Activated CD8-positive, alpha-beta T cell treated with anti-CD3 and anti-CD28 coated beads for 36 hours (primary cell): ENCODE measurements at regions of chr7 and their contacts with region 1.

Region 1: GRCh38 chr7:128343554-128344430 is at the start of gene RBM28:
- DNase-seq: peak; percentile 90
- ATAC-seq: peak; percentile 97
- H3K4me3 Mint-ChIP-seq: peak within 1 kb of the TSS; percentile 85
- H3K27ac Mint-ChIP-seq: peak within 1 kb of the TSS; percentile 93
- H3K4me1 Mint-ChIP-seq: peaks cover 26% of the 10 kb centered on the region
- H3K27me3 Mint-ChIP-seq: peaks cover 3% of the 10 kb centered on the region
- CTCF ChIP-seq: no peak
- total RNA-seq, gene RBM28: 55.3 to 55.6 TPM

Region 2: DNA sequence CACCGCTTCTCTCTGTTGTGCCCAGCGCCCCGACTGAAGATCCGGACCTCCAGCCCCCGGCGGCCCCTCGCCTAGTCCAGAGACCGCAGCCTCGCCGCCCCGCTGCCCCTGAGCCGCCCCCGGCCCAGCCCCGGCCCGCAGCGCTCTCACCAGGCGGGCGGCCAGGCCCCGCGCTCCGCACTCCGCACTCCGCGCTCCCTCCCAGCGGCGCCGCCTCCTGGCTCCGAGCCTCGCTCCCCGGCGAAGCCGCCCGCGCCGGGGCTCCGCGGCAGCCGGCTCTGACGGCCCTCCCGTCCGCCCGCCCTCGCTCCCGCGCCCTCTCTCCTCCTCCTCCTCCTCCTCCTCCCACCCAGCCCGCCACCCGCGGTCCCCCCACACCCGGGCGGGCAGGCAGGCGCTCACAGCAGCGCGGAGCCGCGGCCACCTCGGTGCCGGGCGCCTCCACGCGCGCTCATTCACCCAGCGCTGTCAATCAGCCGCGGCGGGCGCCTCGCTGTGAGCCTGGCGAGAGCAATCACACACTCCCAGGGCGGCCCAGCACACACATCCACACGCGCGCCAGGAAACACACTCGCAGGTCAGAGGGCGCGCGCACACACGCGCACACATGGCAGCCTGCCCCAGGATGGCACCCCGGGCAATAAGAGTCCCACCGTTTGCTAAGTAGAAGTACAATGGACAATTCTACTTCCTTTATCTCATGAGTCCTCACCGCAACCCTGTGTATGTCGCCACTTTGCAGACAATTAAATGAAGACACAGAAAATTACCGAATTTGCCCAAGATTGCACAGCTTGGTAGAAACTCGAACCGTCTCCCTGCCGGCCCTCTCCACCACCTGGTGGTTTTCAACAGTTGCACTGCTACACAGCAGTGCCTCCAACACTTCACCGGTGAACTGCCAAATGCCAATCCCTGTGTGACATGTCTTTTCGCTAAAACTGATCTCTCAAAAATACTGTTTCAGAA is 17.9 kb after region 1 on chr7 and contains the start of gene PRRT4:
- CTCF ChIA-PET with region 1: interaction called, 12 read pairs
- POLR2A ChIA-PET with region 1: interaction called, 11 read pairs
- intact Hi-C with region 1: no loop called
- DNase-seq: peak; percentile 45
- ATAC-seq: peak; percentile 63
- H3K4me3 Mint-ChIP-seq: peak within 1 kb of the TSS; percentile 64
- H3K27ac Mint-ChIP-seq: peak within 1 kb of the TSS; percentile 15
- H3K4me1 Mint-ChIP-seq: peaks cover 19% of the 10 kb centered on the region
- H3K27me3 Mint-ChIP-seq: peaks cover 51% of the 10 kb centered on the region
- CTCF ChIP-seq: no peak
- total RNA-seq, gene PRRT4: 0.20 to 0.69 TPM

Region 3: GRCh38 chr7:128373606-128374005 is 29.8 kb after region 1 on chr7:
- CTCF ChIA-PET with region 1: interaction called, 79 read pairs
- POLR2A ChIA-PET with region 1: no interaction called
- intact Hi-C with region 1: no loop called
- DNase-seq: no peak
- ATAC-seq: no peak
- H3K4me3 Mint-ChIP-seq: no peak overlapping the region
- H3K27ac Mint-ChIP-seq: no peak overlapping the region
- H3K4me1 Mint-ChIP-seq: no peaks in the 10 kb centered on the region
- H3K27me3 Mint-ChIP-seq: peaks cover 6% of the 10 kb centered on the region
- CTCF ChIP-seq: no peak

Region 4: GRCh38 chr7:128381161-128381821 is 37.5 kb after region 1 on chr7:
- CTCF ChIA-PET with region 1: interaction called, 264 read pairs
- POLR2A ChIA-PET with region 1: interaction called, 4 read pairs
- intact Hi-C with region 1: loop called (anchors 2 kb)
- DNase-seq: peak; percentile 73
- ATAC-seq: peak; percentile 61
- H3K4me3 Mint-ChIP-seq: no peak overlapping the region
- H3K27ac Mint-ChIP-seq: no peak overlapping the region
- H3K4me1 Mint-ChIP-seq: no peaks in the 10 kb centered on the region
- H3K27me3 Mint-ChIP-seq: no peaks in the 10 kb centered on the region
- CTCF ChIP-seq: peak; percentile 83

Region 5: GRCh38 chr7:128398016-128398840 is 54.4 kb after region 1 on chr7:
- CTCF ChIA-PET with region 1: interaction called, 264 read pairs
- POLR2A ChIA-PET with region 1: no interaction called
- intact Hi-C with region 1: no loop called
- DNase-seq: peak; percentile 58
- ATAC-seq: peak; percentile 72
- H3K4me3 Mint-ChIP-seq: no peak overlapping the region
- H3K27ac Mint-ChIP-seq: no peak overlapping the region
- H3K4me1 Mint-ChIP-seq: no peaks in the 10 kb centered on the region
- H3K27me3 Mint-ChIP-seq: no peaks in the 10 kb centered on the region
- CTCF ChIP-seq: peak; percentile 96

Region 6: GRCh38 chr7:128409596-128410160 is 65.9 kb after region 1 on chr7 and contains the start of gene IMPDH1:
- CTCF ChIA-PET with region 1: interaction called, 11 read pairs
- POLR2A ChIA-PET with region 1: interaction called, 3 read pairs
- intact Hi-C with region 1: no loop called
- DNase-seq: peak; percentile 85
- ATAC-seq: peak; percentile 84
- H3K4me3 Mint-ChIP-seq: peak within 1 kb of the TSS; percentile 76
- H3K27ac Mint-ChIP-seq: peak within 1 kb of the TSS; percentile 59
- H3K4me1 Mint-ChIP-seq: peaks cover 18% of the 10 kb centered on the region
- H3K27me3 Mint-ChIP-seq: peaks cover 10% of the 10 kb centered on the region
- CTCF ChIP-seq: no peak
- total RNA-seq, gene IMPDH1: 60.5 to 68.1 TPM